ENCODE measurements at regions of chr2 and their contacts with region 1.

Region 1: GRCh38 chr2:161223139-161223732 is 63.0 kb downstream of the TANK start:
- DNase-seq: peak in 7 of 9 donors; percentile 23 to 60 (median 55)
- ATAC-seq: peak; percentile 83
- H3K4me3 ChIP-seq: no peak overlapping the region
- H3K4me3 Mint-ChIP-seq: no peak overlapping the region
- H3K27ac ChIP-seq: no peak overlapping the region
- H3K27ac Mint-ChIP-seq: peak overlapping the region in 1 of 9 donors; percentile 5
- H3K4me1 ChIP-seq: no peaks in the 10 kb centered on the region
- H3K4me1 Mint-ChIP-seq: peaks cover 0 to 14% (median 0%) of the 10 kb centered on the region in 7 donors
- H3K27me3 ChIP-seq: no peaks in the 10 kb centered on the region
- H3K27me3 Mint-ChIP-seq: no peaks in the 10 kb centered on the region

Region 2: GRCh38 chr2:161243905-161244304 is 20.7 kb after region 1 on chr2:
- CTCF ChIA-PET with region 1: interaction called, 7 read pairs
- POLR2A ChIA-PET with region 1: no interaction called
- intact Hi-C with region 1: loop called in 1 of 2 experiments (anchors 1 kb)
- DNase-seq: peak in 3 of 9 donors; percentile 18 to 22 (median 18)
- ATAC-seq: no peak
- H3K4me3 ChIP-seq: peak overlapping the region; percentile 61
- H3K4me3 Mint-ChIP-seq: peak overlapping the region; percentile 82 to 98 (median 92)
- H3K27ac ChIP-seq: peak overlapping the region; percentile 83
- H3K27ac Mint-ChIP-seq: peak overlapping the region; percentile 88 to 96 (median 94)
- H3K4me1 ChIP-seq: peaks cover 15 to 25% of the 10 kb centered on the region in 2 donors
- H3K4me1 Mint-ChIP-seq: peaks cover 15 to 73% (median 65%) of the 10 kb centered on the region in 7 donors
- H3K27me3 ChIP-seq: no peaks in the 10 kb centered on the region
- H3K27me3 Mint-ChIP-seq: no peaks in the 10 kb centered on the region

Region 3: GRCh38 chr2:161273038-161273760 is 50.0 kb after region 1 on chr2:
- CTCF ChIA-PET with region 1: interaction called, 79 read pairs
- POLR2A ChIA-PET with region 1: interaction called, 3 read pairs
- intact Hi-C with region 1: loop called (anchors 1 kb)
- DNase-seq: peak in 7 of 9 donors; percentile 26 to 65 (median 58)
- ATAC-seq: peak; percentile 80
- H3K4me3 ChIP-seq: no peak overlapping the region
- H3K4me3 Mint-ChIP-seq: no peak overlapping the region
- H3K27ac ChIP-seq: no peak overlapping the region
- H3K27ac Mint-ChIP-seq: no peak overlapping the region
- H3K4me1 ChIP-seq: no peaks in the 10 kb centered on the region
- H3K4me1 Mint-ChIP-seq: peaks cover 0 to 3% (median 0%) of the 10 kb centered on the region in 7 donors
- H3K27me3 ChIP-seq: no peaks in the 10 kb centered on the region
- H3K27me3 Mint-ChIP-seq: peaks cover 4 to 27% (median 5%) of the 10 kb centered on the region in 5 donors

Region 4: GRCh38 chr2:161414042-161415033 is 191.1 kb after region 1 on chr2:
- CTCF ChIA-PET with region 1: no interaction called
- POLR2A ChIA-PET with region 1: no interaction called
- intact Hi-C with region 1: loop called in 1 of 2 experiments (anchors 5 kb)
- DNase-seq: peak in 1 of 9 donors; percentile 33
- ATAC-seq: peak; percentile 63
- H3K4me3 ChIP-seq: peak overlapping the region; percentile 43
- H3K4me3 Mint-ChIP-seq: peak overlapping the region; percentile 54 to 84 (median 74)
- H3K27ac ChIP-seq: no peak overlapping the region
- H3K27ac Mint-ChIP-seq: peak overlapping the region in 1 of 9 donors; percentile 32
- H3K4me1 ChIP-seq: peaks cover 23 to 31% of the 10 kb centered on the region in 2 donors
- H3K4me1 Mint-ChIP-seq: peaks cover 30 to 52% (median 50%) of the 10 kb centered on the region in 7 donors
- H3K27me3 ChIP-seq: peaks cover 7 to 38% of the 10 kb centered on the region in 2 donors
- H3K27me3 Mint-ChIP-seq: peaks cover 52 to 56% (median 53%) of the 10 kb centered on the region in 5 donors

Region 5: GRCh38 chr2:161946489-161947107 is 723.4 kb after region 1 on chr2:
- CTCF ChIA-PET with region 1: interaction called, 3 read pairs
- POLR2A ChIA-PET with region 1: no interaction called
- intact Hi-C with region 1: loop called (anchors 1 kb)
- DNase-seq: peak in 4 of 9 donors; percentile 18 to 38 (median 28)
- ATAC-seq: no peak
- H3K4me3 ChIP-seq: no peak overlapping the region
- H3K4me3 Mint-ChIP-seq: no peak overlapping the region
- H3K27ac ChIP-seq: no peak overlapping the region
- H3K27ac Mint-ChIP-seq: no peak overlapping the region
- H3K4me1 ChIP-seq: peaks cover 0 to 9% of the 10 kb centered on the region in 2 donors
- H3K4me1 Mint-ChIP-seq: peaks cover 0 to 36% (median 3%) of the 10 kb centered on the region in 7 donors
- H3K27me3 ChIP-seq: no peaks in the 10 kb centered on the region
- H3K27me3 Mint-ChIP-seq: peaks cover 0 to 20% (median 0%) of the 10 kb centered on the region in 5 donors

Measured in naive thymus-derived CD4-positive, alpha-beta T cell (primary cell).